ENCODE measurements at regions of chr22 and their contacts with region 1.

Region 1: GRCh38 chr22:17117890-17118289 is 3.3 kb downstream of the TMEM121B start:
- DNase-seq: no peak
- ATAC-seq: peak; percentile 44
- H3K4me3 Mint-ChIP-seq: peak overlapping the region; percentile 58
- H3K27ac Mint-ChIP-seq: peak overlapping the region; percentile 84
- H3K4me1 Mint-ChIP-seq: peaks cover 42% of the 10 kb centered on the region
- H3K27me3 Mint-ChIP-seq: peaks cover 25% of the 10 kb centered on the region

Region 2: DNA sequence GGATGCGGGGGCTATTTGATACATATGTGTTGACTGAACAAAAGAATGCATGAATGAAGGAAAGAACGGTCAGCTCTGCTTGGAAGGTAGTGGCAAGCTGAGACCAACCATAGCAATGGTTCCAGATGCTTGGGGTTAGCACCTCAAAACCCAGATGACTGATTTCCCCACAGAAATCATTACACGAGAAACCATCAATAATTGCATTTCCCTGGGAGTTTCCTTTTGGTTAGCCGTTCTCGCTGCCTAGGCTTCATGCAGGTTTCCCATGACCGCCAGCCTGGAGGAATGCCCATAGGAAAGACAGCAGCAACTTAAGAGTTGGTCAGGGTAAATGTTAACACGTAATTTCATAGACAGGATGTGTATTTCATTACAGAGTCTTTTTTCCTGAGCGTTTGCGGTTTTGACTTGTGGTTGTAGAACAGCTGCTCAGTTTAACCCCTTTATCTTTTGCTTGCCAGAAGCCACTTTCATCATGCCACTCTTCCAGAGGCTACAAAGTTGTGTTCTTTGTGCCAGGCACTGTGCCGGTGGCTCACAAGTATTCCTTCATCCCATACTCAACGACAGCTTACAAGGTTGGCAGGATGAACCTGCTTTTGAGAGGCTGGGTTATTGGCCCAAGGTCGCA is 30.3 kb before region 1 on chr22:
- POLR2A ChIA-PET with region 1: interaction called, 16 read pairs
- DNase-seq: peak; percentile 62
- ATAC-seq: peak; percentile 6
- H3K4me3 Mint-ChIP-seq: peak overlapping the region; percentile 89
- H3K27ac Mint-ChIP-seq: peak overlapping the region; percentile 87
- H3K4me1 Mint-ChIP-seq: peaks cover 56% of the 10 kb centered on the region
- H3K27me3 Mint-ChIP-seq: no peaks in the 10 kb centered on the region

Region 3: GRCh38 chr22:17098379-17098819 is 19.5 kb before region 1 on chr22:
- POLR2A ChIA-PET with region 1: interaction called, 10 read pairs
- DNase-seq: no peak
- ATAC-seq: peak; percentile 87
- H3K4me3 Mint-ChIP-seq: peak overlapping the region; percentile 56
- H3K27ac Mint-ChIP-seq: peak overlapping the region; percentile 80
- H3K4me1 Mint-ChIP-seq: peaks cover 58% of the 10 kb centered on the region
- H3K27me3 Mint-ChIP-seq: no peaks in the 10 kb centered on the region

Region 4: DNA sequence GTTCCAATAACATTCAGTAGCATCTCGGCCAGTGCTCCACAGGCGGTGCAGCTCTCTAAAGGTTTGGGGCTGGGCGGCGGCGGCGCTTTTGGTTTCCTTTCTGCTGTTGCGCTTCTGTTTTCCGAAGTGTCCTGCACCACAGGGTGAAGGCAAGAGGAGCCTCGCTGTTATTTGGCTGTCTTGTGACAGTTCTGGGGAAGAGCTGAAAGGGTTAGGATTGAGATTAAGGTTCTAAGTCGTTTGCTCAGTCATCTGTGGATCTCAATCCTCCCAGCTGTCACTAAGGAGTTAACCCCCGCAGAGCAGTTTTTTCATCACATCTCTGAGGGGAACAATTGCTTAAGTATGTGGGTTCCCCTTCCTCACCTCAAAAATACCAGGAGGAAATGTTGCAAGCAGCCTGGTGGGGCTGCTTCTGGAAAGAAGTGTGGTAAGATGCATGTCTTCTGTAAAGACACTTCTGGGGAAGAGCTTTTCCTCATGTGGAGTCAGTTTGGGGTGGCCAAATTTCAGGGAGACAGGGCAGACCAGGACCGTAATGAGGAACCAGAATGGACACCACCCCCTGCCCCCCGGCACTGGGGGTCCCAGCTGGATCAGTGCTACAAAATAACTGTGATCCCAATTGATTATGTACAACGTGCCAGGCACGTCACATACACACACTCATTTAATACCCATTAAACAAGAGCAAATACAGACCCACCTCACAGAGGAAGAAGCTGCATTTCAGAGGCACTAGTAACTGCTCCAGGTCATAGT is 10.9 kb before region 1 on chr22:
- POLR2A ChIA-PET with region 1: interaction called, 13 read pairs
- DNase-seq: peak; percentile 63
- ATAC-seq: peak; percentile 93
- H3K4me3 Mint-ChIP-seq: peak overlapping the region; percentile 78
- H3K27ac Mint-ChIP-seq: peak overlapping the region; percentile 91
- H3K4me1 Mint-ChIP-seq: peaks cover 23% of the 10 kb centered on the region
- H3K27me3 Mint-ChIP-seq: no peaks in the 10 kb centered on the region

Measured in activated naive CD8-positive, alpha-beta T cell treated with anti-CD3 and anti-CD28 coated beads, Interleukin-2, amount 10 ng/mL, durations not matched to agents 7 days and 5 days (primary cell).